A549 (cell line): ENCODE measurements at regions of chr1 and their contacts with region 1.

Region 1: GRCh38 chr1:16243936-16244649 is 7.1 kb upstream of the CPLANE2 start:
- DNase-seq: peak; percentile 73 to 79
- ATAC-seq: peak; percentile 84 to 87
- H3K4me3 ChIP-seq: no peak overlapping the region
- H3K27ac ChIP-seq: peak overlapping the region in 1 of 2 experiments; percentile 27; a peak in 3 of 6 replicates
- H3K4me1 ChIP-seq: peaks cover 16% of the 10 kb centered on the region; the same call in 2 of the 3 replicates
- CTCF ChIP-seq: peak; percentile 76
- EP300 ChIP-seq: no peak
- POLR2A ChIP-seq: no peak
- RAD21 ChIP-seq: peak; percentile 83 to 90

Region 2: DNA sequence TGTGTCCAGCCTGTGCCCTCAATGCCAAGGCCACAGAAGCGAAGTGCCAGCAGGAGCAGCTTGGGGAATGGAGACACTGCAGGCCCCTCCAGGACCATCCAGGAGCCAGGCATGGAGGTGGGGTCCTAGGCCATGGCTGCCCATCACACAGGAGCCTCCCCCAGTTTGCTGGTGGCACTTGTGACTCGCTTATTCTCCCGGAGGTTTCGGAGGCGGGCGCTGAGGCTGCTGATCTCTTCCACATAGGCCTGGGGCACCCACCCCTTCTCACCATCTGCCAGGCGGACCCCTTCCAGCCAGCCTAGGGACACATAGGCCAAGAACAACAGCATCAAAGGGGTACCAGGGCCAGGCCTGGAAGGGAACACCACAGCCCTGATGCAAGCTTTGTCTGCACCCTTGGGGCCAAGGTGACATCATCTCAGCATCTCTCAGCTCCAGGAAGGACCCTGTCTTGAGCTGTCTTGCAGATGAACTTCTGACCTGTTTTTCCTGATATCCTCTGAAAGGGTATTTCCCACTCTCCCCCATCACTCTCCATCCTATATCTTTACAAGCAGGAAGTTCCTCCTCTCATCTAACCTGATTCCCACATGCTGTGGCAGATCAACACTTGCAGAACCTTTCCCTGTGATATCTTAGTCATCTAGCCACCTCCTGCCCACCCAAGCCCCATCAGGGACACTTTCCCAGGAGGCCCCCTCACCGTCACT is 45.5 kb before region 1 on chr1:
- CTCF ChIA-PET with region 1: interaction called, 31 read pairs
- POLR2A ChIA-PET with region 1: no interaction called
- DNase-seq: no peak
- ATAC-seq: no peak; a peak in 1 of 6 replicates
- H3K4me3 ChIP-seq: no peak overlapping the region
- H3K27ac ChIP-seq: no peak overlapping the region
- H3K4me1 ChIP-seq: no peaks in the 10 kb centered on the region
- CTCF ChIP-seq: no peak
- EP300 ChIP-seq: no peak
- POLR2A ChIP-seq: no peak
- RAD21 ChIP-seq: no peak

Region 3: GRCh38 chr1:16206547-16207317 is 37.4 kb before region 1 on chr1:
- CTCF ChIA-PET with region 1: interaction called, 31 read pairs
- POLR2A ChIA-PET with region 1: interaction called, 6 read pairs
- DNase-seq: peak; percentile 76 to 97
- ATAC-seq: peak; percentile 92 to 95
- H3K4me3 ChIP-seq: peak overlapping the region; percentile 51
- H3K27ac ChIP-seq: peak overlapping the region; percentile 84 to 95
- H3K4me1 ChIP-seq: peaks cover 26% of the 10 kb centered on the region
- CTCF ChIP-seq: no peak
- EP300 ChIP-seq: no peak
- POLR2A ChIP-seq: peak; percentile 85
- RAD21 ChIP-seq: no peak

Region 4: DNA sequence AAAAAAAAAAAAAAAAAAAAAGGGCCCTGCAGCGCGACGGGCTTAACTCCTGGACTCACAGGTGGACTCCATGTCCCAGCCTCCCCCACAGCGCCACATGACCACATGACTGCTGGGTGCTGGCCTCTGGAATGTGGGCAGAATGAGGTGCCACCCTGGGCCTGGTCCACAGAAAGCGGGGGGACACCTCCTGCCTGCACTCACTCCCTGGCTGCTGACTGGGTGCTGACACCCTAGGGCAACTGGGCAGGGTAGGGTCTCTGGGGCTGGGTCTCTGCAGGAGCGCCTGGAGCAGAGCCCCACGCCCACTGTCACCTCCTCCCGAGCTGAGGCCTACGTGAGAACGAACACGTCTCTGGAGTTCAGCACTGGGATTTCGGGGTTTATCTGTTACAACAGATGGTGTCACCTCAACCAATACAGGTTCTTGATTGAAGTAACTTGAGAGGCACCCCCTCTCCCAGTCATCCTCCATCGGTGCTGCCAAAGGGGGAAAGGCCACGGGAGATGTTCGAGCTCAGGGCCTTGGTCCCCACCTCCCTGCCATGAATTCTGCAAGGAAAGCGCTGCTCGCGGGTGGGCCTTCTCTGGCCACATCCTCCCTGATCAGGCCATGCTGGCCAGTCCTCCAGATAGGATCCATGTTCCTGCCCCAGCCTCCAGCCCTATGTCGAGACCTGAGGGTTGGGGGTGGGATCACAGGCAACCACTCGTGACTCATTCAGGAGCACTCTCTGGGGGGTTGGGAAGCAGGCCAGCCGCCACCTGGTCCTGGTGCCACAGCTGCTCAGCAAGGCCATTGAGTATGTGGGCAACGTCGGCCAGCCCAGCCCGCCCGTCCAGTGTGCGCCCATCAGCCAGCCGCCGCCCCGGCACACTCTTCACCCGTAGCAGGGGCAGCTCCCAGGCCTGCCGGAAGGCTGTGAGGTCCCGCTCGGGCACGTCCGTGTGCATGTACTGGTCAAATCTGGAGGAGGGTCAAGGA is 12.5 kb before region 1 on chr1:
- CTCF ChIA-PET with region 1: interaction called, 14 read pairs
- POLR2A ChIA-PET with region 1: no interaction called
- DNase-seq: no peak
- ATAC-seq: no peak
- H3K4me3 ChIP-seq: no peak overlapping the region
- H3K27ac ChIP-seq: no peak overlapping the region
- H3K4me1 ChIP-seq: peaks cover 6% of the 10 kb centered on the region
- CTCF ChIP-seq: no peak
- EP300 ChIP-seq: no peak
- POLR2A ChIP-seq: no peak
- RAD21 ChIP-seq: no peak

Region 5: DNA sequence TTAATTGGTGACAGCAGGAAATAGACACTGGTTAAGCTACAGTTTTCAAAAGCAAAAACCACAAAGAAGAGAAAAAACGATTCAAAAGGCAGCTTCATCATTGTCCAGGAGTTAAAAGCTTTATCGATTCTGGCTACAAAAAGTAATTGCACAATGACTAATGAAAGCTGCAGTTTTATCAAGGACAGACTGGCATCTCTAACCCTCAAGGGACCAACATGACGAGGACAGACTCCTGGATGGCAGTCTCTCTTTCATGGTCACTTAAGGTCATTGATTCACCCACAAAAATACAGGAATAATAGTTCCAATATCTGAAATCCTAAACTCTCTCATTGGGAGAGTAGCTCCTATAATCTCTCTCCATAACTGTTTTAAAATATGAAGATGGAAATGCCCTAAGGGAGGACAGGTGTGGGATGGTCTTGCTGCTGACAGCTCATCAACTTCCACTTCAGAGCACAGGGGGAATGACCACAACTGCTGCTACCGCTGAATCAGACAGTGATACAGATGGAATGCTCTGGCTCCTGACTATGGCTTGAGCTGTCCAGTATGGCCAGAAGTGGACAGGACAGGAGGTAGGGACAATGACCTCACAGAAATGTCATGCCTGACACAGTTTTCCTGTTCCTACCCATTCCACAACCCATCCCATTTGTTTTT is 10.3 kb after region 1 on chr1:
- CTCF ChIA-PET with region 1: interaction called, 11 read pairs
- POLR2A ChIA-PET with region 1: no interaction called
- DNase-seq: no peak
- ATAC-seq: no peak
- H3K4me3 ChIP-seq: no peak overlapping the region
- H3K27ac ChIP-seq: no peak overlapping the region
- H3K4me1 ChIP-seq: peaks cover 19% of the 10 kb centered on the region; the same call in 2 of the 3 replicates
- CTCF ChIP-seq: no peak
- EP300 ChIP-seq: no peak
- POLR2A ChIP-seq: no peak
- RAD21 ChIP-seq: no peak

Region 6: DNA sequence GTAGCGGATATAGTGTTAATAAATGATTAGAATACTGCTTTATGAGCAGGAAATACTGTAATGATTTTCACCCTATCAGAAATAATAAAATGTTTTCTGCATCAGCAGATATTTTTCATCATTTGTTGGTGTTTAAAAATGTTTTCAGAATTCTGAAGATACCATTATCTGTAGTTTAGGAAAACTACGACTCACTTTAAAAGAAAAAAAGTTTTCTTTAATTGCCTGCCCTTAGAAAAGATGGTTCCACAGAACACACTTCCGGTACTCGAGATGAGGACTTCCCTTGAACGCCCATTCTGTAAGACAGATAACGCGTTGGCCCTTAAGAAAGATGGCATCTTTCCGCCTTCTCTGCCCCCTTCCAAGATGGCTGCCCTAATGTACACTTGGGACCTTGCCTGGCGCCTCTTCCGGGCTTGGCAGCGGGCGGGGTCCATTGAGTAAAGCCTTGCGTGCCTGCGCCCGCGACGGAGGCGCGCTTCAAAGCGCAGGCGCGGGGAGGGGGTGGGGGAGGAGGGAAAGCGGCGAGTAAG is 122.7 kb after region 1 on chr1 and contains the start of gene SZRD1:
- CTCF ChIA-PET with region 1: interaction called, 13 read pairs
- POLR2A ChIA-PET with region 1: no interaction called
- DNase-seq: peak; percentile 78 to 99
- ATAC-seq: peak; percentile 88 to 91
- H3K4me3 ChIP-seq: peak within 1 kb of the TSS; percentile 71
- H3K27ac ChIP-seq: peak within 1 kb of the TSS; percentile 96 to 97
- H3K4me1 ChIP-seq: peaks cover 35% of the 10 kb centered on the region
- CTCF ChIP-seq: no peak
- EP300 ChIP-seq: no peak
- POLR2A ChIP-seq: no peak
- RAD21 ChIP-seq: no peak
- polyA plus RNA-seq, gene SZRD1: 56.8 and 62.9 TPM in 2 replicates